Mammary epithelial cell (primary cell): ENCODE measurements at regions of chr2 and their contacts with region 1.

Region 1: GRCh38 chr2:54341656-54342055 is 85.6 kb upstream of the TSPYL6 start:
- DNase-seq: no peak
- H3K4me3 ChIP-seq: no peak overlapping the region
- H3K27ac ChIP-seq: no peak overlapping the region
- H3K4me1 ChIP-seq: no peaks in the 10 kb centered on the region
- H3K27me3 ChIP-seq: no peaks in the 10 kb centered on the region
- CTCF ChIP-seq: no peak

Region 2: DNA sequence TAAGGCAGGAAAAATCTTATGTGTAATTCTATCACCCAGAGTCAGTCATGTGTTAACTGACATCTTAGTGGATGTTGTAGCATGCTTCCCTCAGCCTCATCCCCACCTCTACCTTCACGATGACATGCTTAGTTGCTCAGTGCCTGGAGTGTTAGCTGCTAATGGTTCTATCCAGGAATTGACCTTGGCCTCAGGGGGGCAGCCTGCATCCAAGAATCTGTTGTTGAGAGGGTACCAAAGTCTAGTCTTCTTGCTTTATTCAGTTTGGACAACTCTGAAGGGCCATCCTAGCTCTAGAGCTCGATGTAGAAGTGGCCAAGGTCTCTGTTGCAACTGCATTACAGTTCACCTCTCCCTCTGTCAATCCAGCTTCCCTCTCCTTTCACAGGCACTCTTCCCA is 165.1 kb before region 1 on chr2:
- CTCF ChIA-PET with region 1: no interaction called
- dilution Hi-C with region 1: no loop called
- in situ Hi-C with region 1: no loop called
- intact Hi-C with region 1: no loop called
- DNase-seq: peak; percentile 24
- H3K4me3 ChIP-seq: no peak overlapping the region
- H3K27ac ChIP-seq: no peak overlapping the region
- H3K4me1 ChIP-seq: no peaks in the 10 kb centered on the region
- H3K27me3 ChIP-seq: no peaks in the 10 kb centered on the region
- CTCF ChIP-seq: peak; percentile 11 to 32

Region 3: DNA sequence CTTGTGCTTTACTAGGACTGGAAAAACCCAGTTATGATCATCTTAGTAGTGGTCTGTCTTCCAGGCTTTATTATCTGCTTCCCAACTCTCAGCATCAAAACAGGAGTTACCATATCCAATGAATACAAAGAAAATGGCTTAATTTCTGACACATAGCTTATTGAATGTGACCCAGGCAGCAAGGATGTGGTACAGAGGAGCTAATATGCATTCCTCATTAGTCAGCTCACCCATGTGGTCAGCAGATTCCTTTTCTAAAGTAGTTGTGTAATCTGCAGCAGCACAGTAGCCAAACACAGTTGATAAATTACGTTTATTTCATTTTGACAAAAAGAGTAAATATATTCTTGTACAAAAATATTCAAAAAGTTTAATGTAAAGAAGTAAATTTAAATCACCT is 129.2 kb before region 1 on chr2:
- CTCF ChIA-PET with region 1: interaction called, 10 read pairs
- dilution Hi-C with region 1: no loop called
- in situ Hi-C with region 1: no loop called
- intact Hi-C with region 1: no loop called
- DNase-seq: peak; percentile 82
- H3K4me3 ChIP-seq: no peak overlapping the region
- H3K27ac ChIP-seq: no peak overlapping the region
- H3K4me1 ChIP-seq: peaks cover 9% of the 10 kb centered on the region
- H3K27me3 ChIP-seq: no peaks in the 10 kb centered on the region
- CTCF ChIP-seq: no peak

Region 4: GRCh38 chr2:54438271-54438670 is 96.6 kb after region 1 on chr2:
- CTCF ChIA-PET with region 1: interaction called, 10 read pairs
- dilution Hi-C with region 1: no loop called
- in situ Hi-C with region 1: no loop called
- intact Hi-C with region 1: no loop called
- DNase-seq: no peak
- H3K4me3 ChIP-seq: no peak overlapping the region
- H3K27ac ChIP-seq: no peak overlapping the region
- H3K4me1 ChIP-seq: no peaks in the 10 kb centered on the region
- H3K27me3 ChIP-seq: no peaks in the 10 kb centered on the region
- CTCF ChIP-seq: no peak